Caco-2 (cell line): ENCODE measurements at regions of chr19 and their contacts with region 1.

Region 1: GRCh38 chr19:52601025-52601973 is 31.2 kb downstream of the ZNF701 start:
- DNase-seq: peak; percentile 96 to 98
- H3K4me3 ChIP-seq: peak overlapping the region; percentile 89
- H3K4me3 Mint-ChIP-seq: peak overlapping the region; percentile 81
- H3K27ac Mint-ChIP-seq: peak overlapping the region; percentile 55
- H3K4me1 ChIP-seq: peaks cover 22% of the 10 kb centered on the region
- H3K4me1 Mint-ChIP-seq: peaks cover 19% of the 10 kb centered on the region
- H3K27me3 ChIP-seq: no peaks in the 10 kb centered on the region
- H3K27me3 Mint-ChIP-seq: no peaks in the 10 kb centered on the region
- CTCF ChIP-seq: peak; percentile 40 to 51

Region 2: DNA sequence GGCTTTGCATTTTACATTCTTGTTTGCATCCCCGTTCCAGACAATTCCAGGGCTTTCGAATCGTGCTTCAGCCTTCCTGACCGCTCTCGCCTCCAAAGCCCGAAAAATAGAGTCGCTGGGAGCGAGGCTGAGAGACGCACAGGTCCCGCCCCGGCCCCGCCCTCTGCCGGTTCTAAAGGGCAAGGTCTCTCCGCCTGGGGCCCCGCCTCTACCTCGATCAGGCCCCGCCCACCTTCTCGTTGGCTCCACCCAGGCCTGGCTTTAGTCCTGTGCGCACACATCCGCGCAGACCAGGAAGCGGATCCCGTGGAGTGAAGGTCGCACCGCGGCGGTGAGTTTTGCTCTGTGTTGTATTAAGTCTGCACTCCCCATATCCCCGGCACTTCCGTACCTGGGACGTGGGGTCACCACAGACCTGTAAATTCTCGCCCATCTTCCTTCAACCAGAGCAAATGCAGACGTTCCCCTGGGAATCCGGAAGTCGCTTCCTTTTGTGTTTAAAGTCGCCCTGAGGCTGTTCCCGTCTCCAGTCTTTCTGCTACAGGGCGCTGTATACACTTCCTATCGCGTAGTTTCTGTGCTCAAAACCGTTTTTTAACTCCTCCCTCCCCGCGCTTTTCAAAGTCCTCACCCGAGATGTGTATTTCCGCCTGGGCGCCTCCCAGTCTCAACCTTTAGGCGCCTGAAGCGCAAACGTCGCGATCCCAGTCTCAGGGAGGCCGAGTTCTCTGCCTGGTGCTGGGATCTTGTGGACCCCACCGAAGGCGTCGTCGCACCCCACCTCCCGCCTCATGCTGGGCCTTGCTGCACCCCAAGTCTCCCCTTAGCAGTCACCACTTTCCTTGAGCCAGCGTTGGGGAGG is 31.1 kb before region 1 on chr19 and contains the start of gene ZNF701:
- CTCF ChIA-PET with region 1: no interaction called
- POLR2A ChIA-PET with region 1: interaction called, 6 read pairs
- intact Hi-C with region 1: loop called (anchors 1 kb)
- DNase-seq: peak; percentile 96 to 98
- H3K4me3 ChIP-seq: peak within 1 kb of the TSS; percentile 77
- H3K4me3 Mint-ChIP-seq: peak within 1 kb of the TSS; percentile 75
- H3K27ac Mint-ChIP-seq: peak within 1 kb of the TSS; percentile 90
- H3K4me1 ChIP-seq: 0 out of 2 replicates have a peak, but pooled peaks cover 3% of the 10 kb centered on the region
- H3K4me1 Mint-ChIP-seq: peaks cover 10% of the 10 kb centered on the region
- H3K27me3 ChIP-seq: no peaks in the 10 kb centered on the region
- H3K27me3 Mint-ChIP-seq: no peaks in the 10 kb centered on the region
- CTCF ChIP-seq: peak; percentile 12 to 42
- total RNA-seq, gene ZNF701: 17.5 and 19.6 TPM in 2 replicates